ENCODE measurements at regions of chr2 and their contacts with region 1.

Region 1: GRCh38 chr2:9205963-9206948 is at the start of gene ASAP2:
- DNase-seq: peak; percentile 51 to 81
- H3K4me3 ChIP-seq: peak within 1 kb of the TSS; percentile 99
- H3K27ac ChIP-seq: peak within 1 kb of the TSS; percentile 74
- H3K4me1 ChIP-seq: peaks cover 44% of the 10 kb centered on the region
- H3K27me3 ChIP-seq: no peaks in the 10 kb centered on the region
- CTCF ChIP-seq: peak; percentile 84
- total RNA-seq, gene ASAP2: 60.3 and 66.8 TPM in 2 replicates

Region 2: DNA sequence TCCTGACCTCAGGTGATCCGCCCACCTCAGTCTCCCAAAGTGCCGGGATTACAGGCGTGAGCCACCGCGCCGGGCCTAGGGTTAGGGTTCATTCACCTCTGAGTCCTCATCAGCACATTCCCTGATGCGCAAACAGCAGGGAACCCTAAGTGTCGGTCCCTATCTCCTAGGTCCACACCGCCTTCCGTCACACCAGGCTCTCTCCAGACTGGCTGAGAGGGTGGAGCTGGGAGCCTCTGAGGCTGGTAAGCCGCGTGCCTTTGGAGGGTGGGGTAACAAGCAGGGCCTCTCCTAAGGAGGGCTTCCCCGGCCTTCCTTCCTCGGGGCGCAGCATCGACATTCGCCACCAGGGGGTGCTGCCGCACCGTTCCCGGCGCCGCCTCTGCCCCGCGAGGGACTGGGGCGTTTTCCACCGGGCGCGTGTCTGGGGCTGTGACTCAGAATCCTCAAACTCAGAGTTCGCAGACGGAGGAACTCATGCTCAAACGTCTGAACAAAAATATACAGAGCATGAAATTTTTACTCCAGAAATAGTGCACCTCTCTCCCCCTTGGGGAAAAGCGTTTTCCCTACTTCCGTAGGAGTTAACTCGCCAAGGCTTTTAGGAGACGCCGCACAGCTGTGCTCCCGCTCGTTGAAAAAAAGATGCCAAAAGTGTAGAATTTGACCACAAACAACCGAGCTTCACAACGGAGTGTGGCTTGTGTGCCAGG is 63.5 kb before region 1 on chr2:
- CTCF ChIA-PET with region 1: no interaction called
- POLR2A ChIA-PET with region 1: no interaction called
- intact Hi-C with region 1: loop called (anchors 1 kb)
- DNase-seq: peak; percentile 85 to 97
- H3K4me3 ChIP-seq: peak overlapping the region; percentile 23; the same call in 1 of the 2 replicates
- H3K27ac ChIP-seq: peak overlapping the region; percentile 45
- H3K4me1 ChIP-seq: peaks cover 60% of the 10 kb centered on the region
- H3K27me3 ChIP-seq: no peaks in the 10 kb centered on the region
- CTCF ChIP-seq: peak; percentile 99

Region 3: DNA sequence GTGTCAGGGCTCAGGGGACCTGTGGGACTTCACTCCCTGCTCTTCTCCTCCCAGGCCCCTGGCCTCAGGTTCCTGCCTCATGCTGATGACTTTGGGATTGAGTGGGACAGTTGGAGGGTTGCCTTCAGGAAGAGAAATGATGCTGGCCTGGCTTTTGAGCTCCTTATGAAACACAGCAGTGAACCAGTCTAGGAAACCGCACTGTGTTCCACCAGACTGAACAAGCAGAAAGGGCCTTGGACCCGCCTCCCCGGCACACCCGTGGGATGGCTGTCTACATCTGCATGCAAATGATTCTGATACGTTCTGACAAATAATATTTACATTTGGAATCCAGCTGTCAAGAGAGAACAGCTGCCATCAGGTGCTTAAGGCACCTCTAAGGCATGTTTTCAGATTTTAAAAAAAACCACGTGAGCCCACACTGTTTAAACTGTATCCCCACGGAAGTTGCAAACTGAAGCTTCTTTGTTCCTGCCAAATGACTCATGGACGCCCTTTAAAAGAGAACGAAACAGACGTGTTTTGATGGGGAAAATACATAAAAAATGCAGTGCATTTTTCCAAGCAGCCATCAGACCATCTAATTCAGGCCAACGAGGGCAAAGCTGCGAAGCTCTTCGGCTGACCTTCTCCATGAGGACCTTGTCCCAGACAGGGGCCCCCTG is 27.2 kb before region 1 on chr2:
- CTCF ChIA-PET with region 1: interaction called, 4 read pairs
- POLR2A ChIA-PET with region 1: interaction called, 12 read pairs
- intact Hi-C with region 1: loop called (anchors 1 kb)
- DNase-seq: peak; percentile 54 to 89
- H3K4me3 ChIP-seq: peak overlapping the region; percentile 18; the same call in 1 of the 2 replicates
- H3K27ac ChIP-seq: peak overlapping the region; percentile 90
- H3K4me1 ChIP-seq: peaks cover 69% of the 10 kb centered on the region
- H3K27me3 ChIP-seq: no peaks in the 10 kb centered on the region
- CTCF ChIP-seq: no peak

Region 4: DNA sequence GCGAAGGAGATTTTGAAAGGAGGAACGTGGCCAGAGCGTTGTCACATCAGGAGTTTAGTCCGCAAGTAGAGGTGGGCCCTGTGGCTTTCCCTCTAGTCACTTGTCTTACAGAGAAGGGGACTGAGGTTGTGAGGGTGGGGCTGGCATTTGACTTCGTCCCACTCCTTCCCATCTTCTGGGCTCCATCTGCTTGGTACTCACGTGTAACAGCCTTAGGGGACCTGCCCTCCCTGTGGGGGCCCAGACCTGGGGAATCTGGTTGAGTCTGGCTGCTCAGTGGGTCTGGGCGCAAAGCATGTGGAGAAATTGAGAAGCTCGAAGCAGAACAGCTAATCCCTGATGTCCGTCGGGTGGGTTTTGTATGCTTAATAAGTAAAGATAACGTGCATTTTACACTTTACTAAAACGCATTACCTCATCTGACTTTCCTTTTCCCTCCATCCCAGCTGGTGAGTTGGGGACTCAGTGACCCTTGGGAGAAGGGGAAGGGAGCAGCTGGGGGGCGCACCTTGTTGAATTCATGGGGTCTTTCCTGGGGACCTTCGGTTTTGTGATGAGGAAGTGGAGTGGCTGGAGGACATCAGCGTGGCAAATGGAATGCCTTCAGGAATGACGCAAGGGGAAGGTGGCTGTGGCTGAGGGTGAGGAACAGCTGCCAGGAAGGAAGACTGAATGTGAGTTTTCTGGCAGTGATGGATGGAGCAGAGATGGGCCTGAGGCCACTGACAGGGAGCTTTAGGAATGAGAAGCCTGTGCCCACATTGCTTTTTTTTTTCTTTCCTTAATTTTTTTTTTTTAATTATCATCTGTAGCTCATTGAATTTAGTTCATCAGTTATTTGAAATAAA is 45.1 kb after region 1 on chr2:
- CTCF ChIA-PET with region 1: no interaction called
- POLR2A ChIA-PET with region 1: interaction called, 10 read pairs
- intact Hi-C with region 1: loop called (anchors 2 kb)
- DNase-seq: peak; percentile 81 to 94
- H3K4me3 ChIP-seq: peak overlapping the region; percentile 9; the same call in 1 of the 2 replicates
- H3K27ac ChIP-seq: peak overlapping the region; percentile 67
- H3K4me1 ChIP-seq: peaks cover 59% of the 10 kb centered on the region
- H3K27me3 ChIP-seq: no peaks in the 10 kb centered on the region
- CTCF ChIP-seq: no peak

Region 5: DNA sequence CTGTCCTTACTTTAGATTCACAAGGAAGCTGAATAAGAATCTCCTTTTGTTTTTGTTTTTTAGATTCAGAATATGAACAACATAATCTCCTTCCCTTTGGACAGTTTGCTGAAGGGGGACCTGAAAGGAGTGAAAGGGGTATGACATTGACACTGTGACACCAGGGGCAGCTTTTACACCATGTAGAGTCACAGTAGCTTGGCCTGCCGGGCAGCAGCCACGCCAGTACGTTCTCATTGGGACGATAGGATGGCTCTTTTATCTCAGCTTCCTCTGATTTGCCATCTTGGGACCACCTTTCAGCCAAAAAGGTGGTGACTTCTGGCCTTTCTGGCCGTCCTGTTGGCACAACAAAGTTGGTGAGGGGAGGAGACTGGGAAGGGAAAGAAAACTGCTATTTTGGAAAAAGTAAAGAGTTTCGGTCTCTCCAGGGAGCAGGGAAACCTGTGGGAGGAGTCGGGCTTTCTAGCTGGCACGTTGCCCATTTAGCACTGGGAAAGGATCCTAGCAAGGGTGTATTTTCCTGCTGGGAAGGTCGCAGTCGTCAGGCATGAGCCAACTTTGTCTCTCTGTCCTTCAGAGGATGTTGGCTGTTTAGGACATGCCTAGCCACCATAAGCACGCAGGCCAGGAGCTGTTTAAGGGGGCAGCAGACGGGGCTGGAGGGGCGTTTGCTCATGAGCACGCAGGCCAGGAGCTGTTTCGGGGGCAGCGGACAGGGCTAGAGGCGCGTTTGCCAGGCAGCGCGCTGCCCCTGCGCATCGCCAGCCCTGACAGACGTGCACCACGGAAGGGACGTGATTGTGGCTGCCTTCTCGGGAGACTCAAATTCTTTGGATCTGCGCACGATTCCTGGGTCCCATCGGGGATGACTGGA is 112.4 kb after region 1 on chr2:
- CTCF ChIA-PET with region 1: no interaction called
- POLR2A ChIA-PET with region 1: no interaction called
- intact Hi-C with region 1: loop called (anchors 1 kb)
- DNase-seq: no peak
- H3K4me3 ChIP-seq: no peak overlapping the region
- H3K27ac ChIP-seq: no peak overlapping the region
- H3K4me1 ChIP-seq: 0 out of 2 replicates have a peak, but pooled peaks cover 7% of the 10 kb centered on the region
- H3K27me3 ChIP-seq: no peaks in the 10 kb centered on the region
- CTCF ChIP-seq: no peak

Region 6: GRCh38 chr2:9423100-9423921 is 217.1 kb after region 1 on chr2 and contains the starts of genes CPSF3 and ITGB1BP1:
- CTCF ChIA-PET with region 1: no interaction called
- POLR2A ChIA-PET with region 1: no interaction called
- intact Hi-C with region 1: loop called (anchors 2 kb)
- DNase-seq: peak; percentile 97 to 98
- H3K4me3 ChIP-seq: peak within 1 kb of the TSS; percentile 80
- H3K27ac ChIP-seq: peak within 1 kb of the TSS; percentile 24
- H3K4me1 ChIP-seq: peaks cover 22% of the 10 kb centered on the region
- H3K27me3 ChIP-seq: no peaks in the 10 kb centered on the region
- CTCF ChIP-seq: no peak
- total RNA-seq, gene CPSF3: 52.0 and 61.5 TPM in 2 replicates
- total RNA-seq, gene ITGB1BP1: 68.1 and 82.5 TPM in 2 replicates

Region 7: GRCh38 chr2:11073776-11074175 is 1867.5 kb after region 1 on chr2:
- CTCF ChIA-PET with region 1: interaction called, 19 read pairs
- POLR2A ChIA-PET with region 1: no interaction called
- intact Hi-C with region 1: no loop called
- DNase-seq: no peak
- H3K4me3 ChIP-seq: no peak overlapping the region
- H3K27ac ChIP-seq: no peak overlapping the region
- H3K4me1 ChIP-seq: peaks cover 13% of the 10 kb centered on the region
- H3K27me3 ChIP-seq: no peaks in the 10 kb centered on the region
- CTCF ChIP-seq: no peak

Measured in PC-9 (cell line).